Naive thymus-derived CD4-positive, alpha-beta T cell (primary cell): ENCODE measurements at regions of chr12 and their contacts with region 1.

Region 1: GRCh38 chr12:71746983-71747611 is 7.6 kb upstream of the RAB21 start:
- DNase-seq: peak in 8 of 9 donors; percentile 28 to 70 (median 56)
- ATAC-seq: peak; percentile 95
- H3K4me3 ChIP-seq: no peak overlapping the region
- H3K4me3 Mint-ChIP-seq: no peak overlapping the region
- H3K27ac ChIP-seq: no peak overlapping the region
- H3K27ac Mint-ChIP-seq: peak overlapping the region in 1 of 9 donors; percentile 51
- H3K4me1 ChIP-seq: no peaks in the 10 kb centered on the region
- H3K4me1 Mint-ChIP-seq: peaks cover 0 to 3% (median 0%) of the 10 kb centered on the region in 7 donors
- H3K27me3 ChIP-seq: no peaks in the 10 kb centered on the region
- H3K27me3 Mint-ChIP-seq: peaks cover 5 to 48% (median 15%) of the 10 kb centered on the region in 5 donors

Region 2: DNA sequence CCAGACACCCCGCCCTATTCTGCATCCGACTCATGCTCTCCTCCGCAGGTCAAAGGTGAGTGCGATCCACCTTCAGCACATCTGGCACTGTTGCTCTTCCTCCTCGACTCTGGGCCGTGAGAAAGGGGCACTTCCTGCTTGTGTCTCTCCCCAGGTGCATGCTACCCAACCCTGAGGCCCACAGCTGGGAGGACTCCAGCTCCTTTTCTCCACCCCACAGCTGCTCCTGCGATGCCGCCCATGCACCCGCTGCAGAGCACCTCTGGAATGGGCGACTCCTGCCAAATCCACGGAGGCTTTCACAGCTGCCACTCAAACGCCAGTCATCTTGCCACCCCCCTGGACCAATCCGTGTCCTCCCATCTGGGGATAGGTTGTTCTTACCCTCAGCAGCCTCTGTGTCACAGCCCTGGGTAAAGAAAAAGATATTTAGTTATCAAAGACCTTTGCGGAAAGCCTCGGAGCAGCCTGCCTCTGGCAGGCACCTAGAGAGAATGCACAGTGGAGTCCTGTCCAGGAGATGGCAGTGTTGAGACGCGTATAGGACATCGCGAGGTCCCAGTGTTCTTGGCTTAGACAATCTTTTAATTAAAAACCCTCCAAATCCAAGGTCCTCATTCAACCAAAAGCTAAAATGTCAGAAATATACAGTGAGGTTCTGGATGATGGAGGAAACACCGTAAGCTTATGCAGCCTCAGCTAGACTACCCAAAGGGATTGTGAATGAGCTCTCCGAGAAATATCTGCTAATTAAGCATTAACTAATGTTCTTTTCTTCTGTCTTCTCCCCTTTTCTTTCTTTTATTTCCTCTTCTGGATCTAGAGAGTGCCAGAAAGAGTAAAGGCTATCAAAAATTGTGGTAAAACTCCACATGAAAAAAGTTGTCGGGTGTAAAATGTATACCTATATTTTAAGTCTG is 1867.8 kb before region 1 on chr12:
- CTCF ChIA-PET with region 1: no interaction called
- POLR2A ChIA-PET with region 1: no interaction called
- intact Hi-C with region 1: loop called in 1 of 2 experiments (anchors 1 kb)
- DNase-seq: peak; percentile 25 to 64 (median 57)
- ATAC-seq: peak; percentile 94
- H3K4me3 ChIP-seq: no peak overlapping the region
- H3K4me3 Mint-ChIP-seq: peak overlapping the region in 1 of 10 donors; percentile 11
- H3K27ac ChIP-seq: no peak overlapping the region
- H3K27ac Mint-ChIP-seq: no peak overlapping the region
- H3K4me1 ChIP-seq: no peaks in the 10 kb centered on the region
- H3K4me1 Mint-ChIP-seq: peaks cover 0 to 8% (median 4%) of the 10 kb centered on the region in 7 donors
- H3K27me3 ChIP-seq: no peaks in the 10 kb centered on the region
- H3K27me3 Mint-ChIP-seq: peaks cover 14 to 35% (median 26%) of the 10 kb centered on the region in 5 donors

Region 3: GRCh38 chr12:70733385-70733784 is 1013.7 kb before region 1 on chr12:
- CTCF ChIA-PET with region 1: no interaction called
- POLR2A ChIA-PET with region 1: no interaction called
- intact Hi-C with region 1: loop called in 1 of 2 experiments (anchors 2 kb)
- DNase-seq: peak in 2 of 9 donors; percentile 8 to 30
- ATAC-seq: peak; percentile 57
- H3K4me3 ChIP-seq: no peak overlapping the region
- H3K4me3 Mint-ChIP-seq: no peak overlapping the region
- H3K27ac ChIP-seq: no peak overlapping the region
- H3K27ac Mint-ChIP-seq: no peak overlapping the region
- H3K4me1 ChIP-seq: no peaks in the 10 kb centered on the region
- H3K4me1 Mint-ChIP-seq: peaks cover 0 to 2% (median 0%) of the 10 kb centered on the region in 7 donors
- H3K27me3 ChIP-seq: no peaks in the 10 kb centered on the region
- H3K27me3 Mint-ChIP-seq: peaks cover 0 to 23% (median 6%) of the 10 kb centered on the region in 5 donors

Region 4: DNA sequence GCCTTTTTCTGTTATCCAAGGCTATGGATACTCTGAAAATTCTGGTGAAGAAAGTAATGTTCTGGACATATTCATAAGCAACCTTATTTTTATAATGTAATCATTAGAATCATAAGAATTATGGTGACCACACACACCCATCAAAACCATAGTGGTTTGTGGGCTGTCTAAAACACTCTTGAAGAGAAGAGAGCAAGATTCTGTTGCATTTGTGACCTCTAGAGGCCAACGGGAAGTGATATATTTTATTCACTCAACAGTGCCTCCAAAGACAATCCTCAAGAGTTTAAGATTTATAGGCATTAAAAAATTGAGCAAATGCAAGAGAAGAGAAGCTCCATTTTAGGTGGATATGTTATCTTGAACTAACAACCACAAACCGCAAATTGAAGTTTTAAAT is 376.0 kb before region 1 on chr12:
- CTCF ChIA-PET with region 1: no interaction called
- POLR2A ChIA-PET with region 1: no interaction called
- intact Hi-C with region 1: no loop called
- DNase-seq: no peak
- ATAC-seq: no peak
- H3K4me3 ChIP-seq: no peak overlapping the region
- H3K4me3 Mint-ChIP-seq: no peak overlapping the region
- H3K27ac ChIP-seq: no peak overlapping the region
- H3K27ac Mint-ChIP-seq: no peak overlapping the region
- H3K4me1 ChIP-seq: no peaks in the 10 kb centered on the region
- H3K4me1 Mint-ChIP-seq: no peaks in the 10 kb centered on the region
- H3K27me3 ChIP-seq: no peaks in the 10 kb centered on the region
- H3K27me3 Mint-ChIP-seq: peaks cover 0 to 5% (median 0%) of the 10 kb centered on the region in 5 donors

Region 5: DNA sequence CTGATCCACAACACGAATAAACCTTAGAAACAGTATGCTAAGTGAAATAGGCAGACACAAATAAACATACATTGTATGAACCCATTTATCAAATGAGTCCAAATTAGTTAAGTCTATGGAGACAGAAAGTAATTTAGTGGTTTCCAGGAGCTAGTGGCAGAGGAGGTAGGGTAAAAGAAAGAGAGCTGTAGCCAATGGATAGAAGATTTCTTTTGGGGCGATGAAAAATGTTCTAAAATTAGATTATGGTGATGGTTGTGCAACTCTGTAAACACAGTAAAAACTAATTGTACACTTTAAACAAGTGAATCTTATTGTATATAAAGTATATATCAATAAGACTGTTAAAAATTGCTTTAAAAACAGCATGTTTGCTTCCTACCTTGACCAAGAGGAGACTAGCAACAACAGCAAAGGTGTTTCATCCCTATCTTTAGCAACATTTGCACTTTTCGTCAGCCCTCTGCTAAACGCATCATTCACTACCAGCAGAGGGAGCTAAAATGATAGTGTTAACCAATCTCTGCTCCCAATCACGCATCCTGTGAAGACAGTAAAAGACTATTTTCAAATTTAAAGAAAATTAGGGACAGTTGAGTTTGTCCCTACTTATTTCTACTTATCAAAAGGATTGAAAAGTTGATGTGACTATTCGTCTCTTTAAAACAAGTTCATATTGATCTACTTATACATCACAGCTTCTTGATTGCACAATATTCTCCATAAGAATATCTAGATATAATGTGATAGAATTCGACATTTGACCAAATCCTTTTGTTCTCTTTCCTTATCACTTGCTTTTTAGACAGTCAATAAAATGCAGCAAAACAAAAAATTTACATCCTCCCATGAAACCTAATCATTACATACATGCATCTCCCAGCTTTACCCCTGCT is 331.5 kb before region 1 on chr12:
- CTCF ChIA-PET with region 1: interaction called, 70 read pairs
- POLR2A ChIA-PET with region 1: no interaction called
- intact Hi-C with region 1: loop called (anchors 1 kb)
- DNase-seq: peak in 7 of 9 donors; percentile 17 to 66 (median 55)
- ATAC-seq: peak; percentile 70
- H3K4me3 ChIP-seq: no peak overlapping the region
- H3K4me3 Mint-ChIP-seq: no peak overlapping the region
- H3K27ac ChIP-seq: no peak overlapping the region
- H3K27ac Mint-ChIP-seq: no peak overlapping the region
- H3K4me1 ChIP-seq: no peaks in the 10 kb centered on the region
- H3K4me1 Mint-ChIP-seq: no peaks in the 10 kb centered on the region
- H3K27me3 ChIP-seq: no peaks in the 10 kb centered on the region
- H3K27me3 Mint-ChIP-seq: peaks cover 2 to 20% (median 18%) of the 10 kb centered on the region in 5 donors

Region 6: DNA sequence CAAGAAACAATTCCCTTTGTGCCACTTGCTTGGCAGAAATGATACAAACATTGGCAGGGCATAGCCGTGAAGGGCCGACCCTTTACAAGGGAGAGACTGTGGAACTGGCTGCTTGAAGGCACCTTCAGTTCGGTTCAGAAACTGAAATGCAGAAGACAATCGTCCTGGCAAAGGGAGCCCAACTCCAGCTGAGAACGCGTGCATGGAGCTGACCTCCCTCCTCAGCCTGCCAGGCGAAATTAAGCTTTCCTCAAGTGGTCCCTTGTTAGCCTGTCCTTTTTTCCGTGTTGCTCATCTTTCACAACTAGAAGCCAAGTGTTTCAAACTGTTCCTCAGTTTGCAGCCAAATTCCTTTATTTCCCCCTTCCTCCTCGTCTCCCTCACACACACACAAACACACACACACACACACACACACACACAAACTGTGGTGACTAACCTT is 299.4 kb before region 1 on chr12:
- CTCF ChIA-PET with region 1: no interaction called
- POLR2A ChIA-PET with region 1: no interaction called
- intact Hi-C with region 1: no loop called
- DNase-seq: no peak
- ATAC-seq: no peak
- H3K4me3 ChIP-seq: no peak overlapping the region
- H3K4me3 Mint-ChIP-seq: no peak overlapping the region
- H3K27ac ChIP-seq: no peak overlapping the region
- H3K27ac Mint-ChIP-seq: no peak overlapping the region
- H3K4me1 ChIP-seq: no peaks in the 10 kb centered on the region
- H3K4me1 Mint-ChIP-seq: peaks cover 0 to 12% (median 0%) of the 10 kb centered on the region in 7 donors
- H3K27me3 ChIP-seq: no peaks in the 10 kb centered on the region
- H3K27me3 Mint-ChIP-seq: peaks cover 17 to 58% (median 41%) of the 10 kb centered on the region in 5 donors

Region 7: DNA sequence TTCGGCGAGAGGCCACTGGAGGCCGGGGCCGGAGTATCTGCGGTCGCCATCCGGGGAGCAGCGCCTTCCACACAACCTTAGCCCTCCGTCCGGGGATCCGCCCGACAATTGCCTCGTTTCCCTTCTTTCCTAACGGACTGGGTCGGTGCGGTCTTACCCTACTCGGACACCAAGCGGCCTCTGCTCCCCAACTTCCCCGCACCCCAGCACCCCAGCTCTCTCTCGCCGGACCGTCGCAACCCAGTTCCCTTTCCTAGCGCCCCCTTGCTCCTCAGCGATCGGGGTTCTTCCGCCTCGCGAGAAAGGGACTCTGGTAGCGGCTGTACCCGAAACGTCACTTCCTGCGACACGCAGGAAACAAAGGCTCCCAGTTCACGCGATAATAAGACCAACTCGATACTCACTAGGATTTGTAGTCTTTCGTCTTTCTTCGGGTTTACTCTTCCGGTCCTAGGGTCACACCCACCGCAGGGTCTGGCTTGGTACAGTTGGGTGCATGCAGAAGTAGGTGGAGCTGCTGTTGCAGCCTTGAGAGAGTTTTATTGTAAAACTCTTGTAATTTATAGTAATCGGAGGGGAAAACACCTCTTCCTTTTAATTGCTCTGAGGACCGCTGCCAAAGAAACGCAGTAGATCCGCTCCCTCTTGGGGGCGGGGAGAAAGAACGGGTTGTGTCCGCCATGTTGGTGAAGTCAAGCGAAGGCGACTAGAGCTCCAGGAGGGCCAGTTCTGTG is 83.4 kb before region 1 on chr12 and contains the start of gene ZFC3H1:
- CTCF ChIA-PET with region 1: interaction called, 4 read pairs
- POLR2A ChIA-PET with region 1: interaction called, 5 read pairs
- intact Hi-C with region 1: loop called (anchors 2 kb)
- DNase-seq: peak; percentile 78 to 97 (median 95)
- ATAC-seq: peak; percentile 87
- H3K4me3 ChIP-seq: peak within 1 kb of the TSS; percentile 76
- H3K4me3 Mint-ChIP-seq: peak within 1 kb of the TSS; percentile 94 to 100 (median 99)
- H3K27ac ChIP-seq: peak within 1 kb of the TSS; percentile 97
- H3K27ac Mint-ChIP-seq: peak within 1 kb of the TSS; percentile 96 to 100 (median 99)
- H3K4me1 ChIP-seq: peaks cover 25 to 29% of the 10 kb centered on the region in 2 donors
- H3K4me1 Mint-ChIP-seq: peaks cover 34 to 70% (median 60%) of the 10 kb centered on the region in 7 donors
- H3K27me3 ChIP-seq: no peaks in the 10 kb centered on the region
- H3K27me3 Mint-ChIP-seq: no peaks in the 10 kb centered on the region
- total RNA-seq, gene ZFC3H1: 74.6 to 147 (median 133) TPM